ENCODE measurements at regions of chr10 and their contacts with region 1.

Region 1: GRCh38 chr10:32402499-32402898 is 43.4 kb upstream of the CCDC7 start:
- DNase-seq: no peak
- ATAC-seq: no peak
- H3K4me3 ChIP-seq: no peak overlapping the region
- H3K27ac ChIP-seq: no peak overlapping the region
- H3K4me1 ChIP-seq: peaks cover 4% of the 10 kb centered on the region; the same call in 1 of the 2 replicates
- H3K27me3 ChIP-seq: no peaks in the 10 kb centered on the region
- CTCF ChIP-seq: no peak

Region 2: DNA sequence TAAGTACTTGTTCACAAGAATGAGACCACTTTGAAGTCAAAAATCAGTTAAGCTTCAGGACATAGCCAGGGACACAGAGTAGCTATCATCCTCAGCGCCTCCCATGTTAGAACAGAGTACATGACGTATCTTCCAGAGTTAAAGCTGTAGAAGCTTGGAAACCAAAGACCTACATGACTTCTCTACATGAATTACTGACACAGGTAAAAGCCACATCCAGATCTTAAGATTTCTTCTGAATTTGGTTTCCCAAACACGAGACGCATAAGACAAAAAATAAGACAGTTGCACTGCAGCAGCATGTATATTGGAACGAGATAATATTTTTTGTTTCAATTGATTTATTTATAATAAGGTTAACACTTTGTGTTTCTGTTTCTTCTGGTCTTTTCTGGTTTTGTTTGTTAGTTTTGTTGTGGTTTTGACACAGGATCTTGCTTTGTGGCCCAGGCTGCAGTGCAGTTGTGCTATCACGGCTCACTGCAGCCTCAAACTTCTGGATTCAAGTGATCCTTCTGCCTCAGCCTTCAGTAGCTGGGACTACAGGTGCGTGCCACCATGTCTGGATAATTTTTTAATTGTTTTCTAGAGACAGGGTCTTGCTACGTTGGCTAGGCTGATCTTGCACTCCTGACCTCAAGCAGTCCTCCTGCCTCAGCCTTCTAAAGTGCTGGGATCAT is 45.3 kb before region 1 on chr10:
- CTCF ChIA-PET with region 1: no interaction called
- POLR2A ChIA-PET with region 1: interaction called, 29 read pairs
- intact Hi-C with region 1: no loop called
- DNase-seq: no peak
- ATAC-seq: no peak
- H3K4me3 ChIP-seq: no peak overlapping the region
- H3K27ac ChIP-seq: no peak overlapping the region
- H3K4me1 ChIP-seq: peaks cover 10% of the 10 kb centered on the region; the same call in 1 of the 2 replicates
- H3K27me3 ChIP-seq: no peaks in the 10 kb centered on the region
- CTCF ChIP-seq: no peak